ENCODE measurements at regions of chr6 and their contacts with region 1.

Region 1: GRCh38 chr6:31901953-31902643 is at the start of gene ZBTB12:
- DNase-seq: peak; percentile 95
- ATAC-seq: peak; percentile 86
- total RNA-seq, gene ZBTB12: 8.4 TPM

Region 2: DNA sequence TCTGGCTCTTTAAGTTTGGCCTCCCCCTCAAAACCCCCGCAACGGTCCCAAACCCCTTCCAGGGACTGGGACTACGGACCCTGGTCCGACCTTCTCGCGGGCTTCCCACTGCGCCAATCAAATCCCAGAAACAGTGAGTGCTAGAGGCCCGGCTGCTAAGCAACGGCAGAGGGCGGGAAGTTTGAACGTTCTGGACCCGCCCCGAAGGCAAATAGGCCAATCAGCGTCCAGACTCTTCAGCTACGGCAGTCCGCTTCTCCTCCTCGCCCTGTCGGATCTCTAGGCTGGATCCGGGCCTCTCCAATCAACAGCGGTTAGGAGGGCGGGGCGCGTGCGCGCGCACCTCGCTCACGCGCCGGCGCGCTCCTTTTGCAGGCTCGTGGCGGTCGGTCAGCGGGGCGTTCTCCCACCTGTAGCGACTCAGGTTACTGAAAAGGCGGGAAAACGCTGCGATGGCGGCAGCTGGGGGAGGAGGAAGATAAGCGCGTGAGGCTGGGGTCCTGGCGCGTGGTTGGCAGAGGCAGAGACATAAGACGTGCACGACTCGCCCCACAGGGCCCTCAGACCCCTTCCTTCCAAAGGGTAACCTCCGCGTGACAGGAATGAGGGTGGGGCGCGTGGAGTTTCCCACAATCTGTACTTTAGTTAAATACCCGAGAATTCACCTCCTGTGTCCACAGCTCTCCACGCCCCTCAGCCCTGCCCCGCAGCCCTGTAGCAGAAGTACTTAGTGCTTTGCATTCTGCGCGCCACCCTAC is 162.3 kb before region 1 on chr6 and contains the start of gene MSH5:
- intact Hi-C with region 1: loop called (anchors 10 kb)
- DNase-seq: peak; percentile 98
- ATAC-seq: peak; percentile 95
- total RNA-seq, gene MSH5: 21.2 TPM

Region 3: DNA sequence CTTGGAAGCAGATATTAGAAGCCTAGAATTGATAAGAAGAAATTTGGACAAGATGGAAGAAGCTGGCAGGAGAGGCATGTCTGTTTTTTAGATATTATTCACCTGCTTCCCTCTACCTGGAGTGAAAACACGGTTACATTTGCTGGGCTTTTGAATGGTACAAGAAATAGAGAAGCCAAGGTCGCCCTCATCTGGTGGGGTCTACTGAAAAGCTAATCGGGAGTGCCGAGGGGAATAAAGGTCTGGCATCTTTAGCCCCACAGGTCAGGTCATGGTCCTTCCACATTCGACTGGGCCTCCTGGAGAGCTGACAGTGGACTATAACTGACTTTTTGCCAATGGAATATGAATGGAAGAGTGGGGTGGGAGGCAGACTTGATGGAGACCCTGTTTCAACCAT is 20.8 kb after region 1 on chr6:
- intact Hi-C with region 1: no loop called
- DNase-seq: no peak
- ATAC-seq: no peak

Region 4: DNA sequence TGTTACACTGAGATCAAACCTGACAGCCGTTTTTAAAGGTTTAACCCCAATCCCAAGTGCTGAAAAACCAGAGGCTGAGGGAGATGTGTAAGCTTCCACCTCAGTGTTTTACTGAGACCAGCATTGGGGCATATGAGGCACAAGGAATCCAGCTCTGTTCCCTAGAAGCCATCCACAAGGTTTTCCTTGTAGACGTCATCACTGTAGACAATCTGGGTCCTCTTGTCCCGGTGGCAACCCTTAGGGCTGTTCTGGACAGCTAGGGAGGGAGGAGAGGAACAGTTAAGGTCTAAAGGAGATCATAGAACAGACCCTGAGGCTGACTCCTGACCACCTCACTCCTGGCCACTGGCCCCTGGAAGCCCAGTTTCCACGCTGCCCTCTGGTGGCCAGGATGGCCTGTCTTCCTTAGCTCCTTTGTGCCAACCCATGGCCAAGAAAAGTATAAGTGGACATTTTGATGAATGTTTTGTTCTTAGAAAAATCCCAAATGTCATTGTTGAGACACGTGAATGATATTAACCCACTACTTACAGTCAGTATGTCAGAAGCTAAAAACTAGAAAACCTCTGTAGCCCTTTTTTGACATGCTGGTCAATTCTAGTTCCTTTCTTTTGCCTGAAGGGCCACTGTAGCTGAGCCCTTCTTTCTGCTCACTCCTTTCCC is 50.2 kb after region 1 on chr6:
- intact Hi-C with region 1: loop called (anchors 5 kb)
- DNase-seq: peak; percentile 78
- ATAC-seq: peak; percentile 78